GM13976 (cell line): ENCODE measurements at regions of chrX and their contacts with region 1.

Region 1: DNA sequence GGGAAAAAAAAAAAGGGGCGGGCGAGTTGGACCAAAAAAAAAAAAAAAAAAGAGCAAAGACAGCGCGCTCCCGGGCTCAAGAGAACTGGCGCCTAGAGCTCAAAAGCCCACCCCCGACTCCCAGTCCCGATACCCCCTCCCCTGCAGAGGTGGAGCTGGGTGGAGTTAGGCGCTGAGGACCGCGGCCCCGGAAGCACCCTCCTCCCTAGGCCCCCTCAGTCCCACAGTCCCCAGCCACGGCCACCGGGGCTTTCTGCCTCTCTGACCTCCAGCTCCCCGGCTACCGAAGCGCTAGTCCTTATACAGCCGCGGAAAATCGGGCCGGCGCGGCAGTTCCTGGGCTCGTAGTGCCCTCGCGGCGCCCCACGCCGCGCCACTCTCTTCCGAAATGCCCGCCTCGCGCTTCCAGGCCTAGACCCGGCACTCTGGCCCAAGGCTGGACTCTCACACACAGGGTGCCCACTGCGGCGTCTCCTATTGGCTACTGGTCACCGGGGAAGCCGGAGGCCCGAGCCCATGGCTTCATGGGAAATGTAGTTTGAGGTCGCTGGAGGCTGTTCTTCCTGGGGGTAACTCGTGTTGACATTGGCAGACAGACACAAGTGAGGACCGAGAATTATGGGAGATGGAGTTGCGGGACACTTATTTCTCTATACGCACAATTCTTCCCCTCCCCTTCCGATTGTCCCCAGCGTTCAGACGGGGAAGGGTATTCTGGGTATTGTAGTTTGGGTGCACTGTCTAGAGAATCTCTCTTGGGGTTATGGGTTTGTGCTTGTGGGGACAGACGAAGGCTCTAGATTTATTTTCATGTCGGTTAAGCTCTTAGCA is at the start of gene ENOX2:
- DNase-seq: peak; percentile 81
- CTCF ChIP-seq: no peak

Region 2: GRCh38 chrX:129577473-129577872 is 1325.5 kb before region 1 on chrX:
- in situ Hi-C with region 1: loop called (anchors 25 kb)
- DNase-seq: no peak
- CTCF ChIP-seq: no peak

Region 3: GRCh38 chrX:130339408-130340222 is 563.4 kb before region 1 on chrX and contains the start of gene SLC25A14:
- in situ Hi-C with region 1: loop called (anchors 25 kb)
- DNase-seq: peak; percentile 76
- CTCF ChIP-seq: no peak

Region 4: DNA sequence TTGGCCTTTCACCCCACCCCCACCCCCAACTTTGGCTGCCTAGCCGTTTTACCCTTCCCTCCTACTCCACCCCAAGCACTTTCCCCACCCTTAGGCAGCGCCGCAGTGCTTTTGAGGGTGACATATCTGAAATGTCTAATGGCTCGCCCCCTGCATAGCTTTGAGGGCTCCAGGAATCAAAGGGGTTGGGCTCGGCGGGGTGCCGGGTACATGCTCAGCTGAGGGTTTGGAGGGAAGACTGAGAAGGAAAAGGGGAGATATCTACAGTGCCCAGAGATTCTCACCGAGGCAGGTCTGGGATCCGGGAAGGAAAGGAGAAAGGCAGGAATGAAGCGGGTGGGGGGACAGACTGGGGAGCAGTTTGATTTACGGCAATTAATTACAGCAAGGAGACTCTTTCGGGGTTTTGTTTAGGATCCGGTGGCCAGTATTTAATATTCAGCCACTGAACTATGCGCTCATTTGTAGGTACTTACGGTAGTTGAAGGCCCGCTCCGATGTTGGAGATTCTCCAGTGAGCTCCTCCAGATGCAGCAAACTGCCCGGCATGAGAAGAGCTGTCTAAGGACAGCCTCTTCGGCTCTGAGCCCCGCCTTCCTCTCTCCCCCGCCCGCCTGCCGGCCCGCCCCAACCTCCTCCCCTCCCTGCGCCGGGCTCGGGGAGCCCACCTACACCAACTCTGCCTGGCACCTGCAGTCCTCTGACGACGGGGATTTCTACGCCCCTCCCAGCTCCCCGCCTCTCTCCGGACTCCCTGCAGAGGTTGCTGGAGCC is 385.9 kb after region 1 on chrX and contains the start of gene IGSF1:
- in situ Hi-C with region 1: no loop called
- DNase-seq: no peak
- CTCF ChIP-seq: no peak